Heart left ventricle (tissue), 16 donors: ENCODE measurements at regions of chr15 and their contacts with region 1.

Region 1: DNA sequence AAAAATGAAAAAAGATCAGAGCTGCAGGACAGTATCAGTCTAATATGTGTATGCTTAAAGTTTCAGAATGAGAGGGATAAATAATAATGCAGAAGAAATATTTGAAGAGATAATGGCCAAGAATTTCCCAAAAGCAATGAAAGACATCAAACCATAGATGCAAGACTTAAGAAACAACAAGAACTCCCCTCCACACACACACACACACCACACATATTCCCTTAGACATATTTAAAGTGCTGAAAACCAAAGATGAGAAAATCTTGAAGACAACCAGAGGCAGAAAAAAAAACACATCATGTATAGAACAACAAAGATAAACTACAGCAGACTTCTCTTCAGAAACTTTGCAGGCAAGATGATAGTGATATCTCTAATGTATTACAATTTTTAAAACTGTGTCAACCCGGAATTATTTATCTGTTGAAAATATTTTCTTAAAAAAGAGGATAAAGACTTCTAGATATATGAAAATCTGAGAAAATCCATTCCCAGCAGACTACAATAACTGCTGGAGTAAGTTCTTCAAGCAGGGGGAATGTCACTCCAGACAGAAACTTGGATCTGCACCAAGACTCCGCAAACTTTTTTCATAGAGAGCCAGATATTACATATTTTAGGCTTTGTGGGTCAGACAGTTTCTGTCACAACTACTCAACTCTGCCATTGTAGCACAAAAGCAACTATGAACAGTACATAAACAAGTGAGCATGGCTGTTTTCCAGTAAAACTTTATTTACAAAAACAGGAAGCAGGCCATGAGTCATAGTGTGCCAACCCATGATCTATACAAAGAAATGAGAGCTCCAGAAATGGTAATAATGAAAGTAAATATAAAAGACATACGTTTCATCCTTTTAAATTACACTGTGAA is 223.4 kb upstream of the CGNL1 start:
- DNase-seq: no peak
- ATAC-seq: peak in 1 of 4 donors; percentile 20
- H3K4me3 ChIP-seq: no peak overlapping the region
- H3K27ac ChIP-seq: peak overlapping the region in 3 of 12 donors; percentile 4 to 47 (median 16)
- H3K4me1 ChIP-seq: peaks cover 3 to 65% (median 41%) of the 10 kb centered on the region in 12 donors
- H3K27me3 ChIP-seq: no peaks in the 10 kb centered on the region
- CTCF ChIP-seq: no peak
- POLR2A ChIP-seq: no peak

Region 2: DNA sequence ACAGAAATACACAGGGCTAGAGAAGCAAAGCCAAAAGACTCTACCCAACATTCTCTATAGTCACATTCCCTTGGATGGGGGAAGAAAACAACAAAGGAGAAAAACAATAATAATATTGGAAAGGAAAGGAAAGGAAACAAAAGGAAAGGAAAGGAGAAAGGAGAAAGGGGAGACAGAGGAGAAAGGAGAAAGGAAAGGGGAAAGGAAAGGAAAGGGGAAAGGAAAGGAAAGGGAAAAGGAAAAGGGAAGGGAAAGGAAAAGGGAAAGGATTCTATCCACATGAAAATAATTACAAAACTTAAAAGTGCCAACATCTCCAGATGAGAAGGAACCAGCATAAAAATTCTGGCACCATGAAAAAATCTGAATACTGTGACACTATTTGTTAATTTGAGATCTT is 633.9 kb before region 1 on chr15:
- intact Hi-C with region 1: no loop called
- DNase-seq: no peak
- ATAC-seq: no peak
- H3K4me3 ChIP-seq: no peak overlapping the region
- H3K27ac ChIP-seq: no peak overlapping the region
- H3K4me1 ChIP-seq: no peaks in the 10 kb centered on the region
- H3K27me3 ChIP-seq: no peaks in the 10 kb centered on the region
- CTCF ChIP-seq: no peak
- POLR2A ChIP-seq: no peak

Region 3: DNA sequence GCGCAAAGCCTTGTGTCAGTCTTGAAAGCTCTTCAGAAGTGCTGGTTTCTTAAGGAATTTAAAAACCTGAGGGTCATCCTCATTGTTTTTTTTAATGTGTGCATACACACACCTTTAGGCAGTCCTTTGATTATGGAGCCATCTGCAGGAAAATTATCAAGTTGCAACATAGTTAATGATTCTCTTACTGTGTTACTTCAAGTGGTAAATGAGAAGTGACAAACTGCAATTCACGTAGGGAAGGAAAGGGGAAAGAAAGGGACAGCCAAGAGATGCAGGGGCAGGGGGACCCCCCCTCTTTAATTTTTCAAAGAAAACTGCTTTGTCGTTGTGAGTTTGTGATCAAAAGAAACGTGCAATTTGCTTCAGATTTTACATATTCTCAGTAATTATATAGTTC is 61.0 kb after region 1 on chr15:
- intact Hi-C with region 1: loop called in 4 of 10 experiments (anchors 5 kb)
- DNase-seq: no peak
- ATAC-seq: peak; percentile 47 to 68 (median 60)
- H3K4me3 ChIP-seq: no peak overlapping the region
- H3K27ac ChIP-seq: no peak overlapping the region
- H3K4me1 ChIP-seq: peaks cover 0 to 67% (median 22%) of the 10 kb centered on the region in 12 donors
- H3K27me3 ChIP-seq: no peaks in the 10 kb centered on the region
- CTCF ChIP-seq: peak; percentile 30 to 73 (median 64)
- POLR2A ChIP-seq: no peak